ENCODE measurements at regions of chr2 and their contacts with region 1.

Region 1: GRCh38 chr2:19208479-19209199 is 149.8 kb downstream of the OSR1 start:
- DNase-seq: no peak
- ATAC-seq: no peak
- H3K4me3 ChIP-seq: no peak overlapping the region
- H3K27ac ChIP-seq: no peak overlapping the region
- H3K4me1 ChIP-seq: peaks cover 5% of the 10 kb centered on the region
- H3K27me3 ChIP-seq: no peaks in the 10 kb centered on the region
- CTCF ChIP-seq: no peak
- POLR2A ChIP-seq: no peak
- RAD21 ChIP-seq: no peak

Region 2: GRCh38 chr2:19219055-19219454 is 10.4 kb after region 1 on chr2:
- CTCF ChIA-PET with region 1: interaction called, 3 read pairs
- POLR2A ChIA-PET with region 1: no interaction called
- dilution Hi-C with region 1: no loop called
- in situ Hi-C with region 1: no loop called
- intact Hi-C with region 1: loop called (anchors 1 kb)
- DNase-seq: no peak
- ATAC-seq: no peak
- H3K4me3 ChIP-seq: no peak overlapping the region
- H3K27ac ChIP-seq: no peak overlapping the region
- H3K4me1 ChIP-seq: peaks cover 7% of the 10 kb centered on the region; the same call in 1 of the 2 replicates
- H3K27me3 ChIP-seq: no peaks in the 10 kb centered on the region
- CTCF ChIP-seq: no peak
- POLR2A ChIP-seq: no peak
- RAD21 ChIP-seq: no peak

Measured in IMR-90 (cell line).